PC-9 (cell line): ENCODE measurements at regions of chr7 and their contacts with region 1.

Region 1: DNA sequence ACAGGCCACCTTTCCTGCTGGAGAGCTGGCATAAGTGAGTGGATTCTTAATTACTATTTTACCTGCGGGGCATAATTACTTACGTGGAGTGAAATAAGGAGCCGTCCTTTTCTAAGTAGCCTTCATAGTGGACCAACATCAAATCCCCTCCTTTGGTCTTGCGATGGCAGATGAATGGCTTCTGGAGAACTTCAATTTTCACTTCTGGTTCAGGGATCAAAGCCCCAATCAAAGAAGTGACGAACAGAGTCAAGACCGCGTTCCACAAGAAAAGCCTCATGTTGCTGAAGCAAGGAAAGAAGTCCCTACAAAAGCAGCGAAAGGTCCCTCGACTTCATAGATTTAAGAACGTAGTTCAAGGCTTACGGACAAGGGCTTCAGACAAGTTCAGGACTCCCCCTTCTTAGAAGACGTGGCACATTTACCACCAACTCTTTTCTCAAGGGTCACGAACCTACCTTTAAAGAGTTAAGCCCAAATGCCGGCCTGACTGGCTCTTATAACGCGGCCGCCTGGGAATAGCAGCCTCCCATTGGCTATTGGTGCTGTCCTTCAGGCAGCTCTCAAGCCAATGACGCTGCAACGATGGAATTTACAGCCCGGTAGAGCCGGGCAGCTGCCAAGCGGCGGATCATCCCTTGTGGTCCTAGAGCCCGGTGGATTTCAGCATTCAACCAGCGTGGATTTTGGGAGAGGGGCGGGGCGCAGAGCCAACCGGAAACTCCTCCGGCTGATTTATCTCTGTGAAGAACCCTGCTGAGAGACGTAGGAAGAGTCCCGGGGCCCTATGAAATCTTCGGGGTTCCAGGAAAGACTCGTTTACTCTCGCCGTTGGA is at the start of gene FKBP14:
- DNase-seq: peak; percentile 97 to 99
- H3K4me3 ChIP-seq: peak within 1 kb of the TSS; percentile 75
- H3K27ac ChIP-seq: peak within 1 kb of the TSS; percentile 66
- H3K4me1 ChIP-seq: peaks cover 43% of the 10 kb centered on the region
- H3K27me3 ChIP-seq: no peaks in the 10 kb centered on the region
- CTCF ChIP-seq: no peak
- total RNA-seq, gene FKBP14: 29.8 and 29.9 TPM in 2 replicates

Region 2: DNA sequence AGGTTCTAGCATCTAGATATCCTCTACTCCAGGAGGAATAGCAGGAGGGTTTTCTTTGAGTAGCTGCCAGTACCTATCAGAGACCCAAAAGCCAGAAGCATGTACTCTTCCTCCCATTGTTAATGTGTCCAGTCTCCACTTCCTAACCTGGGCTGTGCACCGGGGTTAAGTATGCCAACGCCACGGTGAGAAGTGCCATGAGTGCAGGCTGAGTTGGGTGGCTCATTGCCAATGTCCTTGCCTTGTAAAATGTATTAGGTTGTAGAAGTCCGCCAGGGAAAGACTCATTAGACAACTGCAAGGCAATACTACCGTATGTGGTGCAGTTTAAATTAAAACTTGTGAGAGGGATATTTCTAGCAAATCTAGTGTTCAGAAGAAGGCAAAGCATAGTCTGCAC is 517.8 kb before region 1 on chr7:
- CTCF ChIA-PET with region 1: no interaction called
- POLR2A ChIA-PET with region 1: no interaction called
- intact Hi-C with region 1: no loop called
- DNase-seq: no peak
- H3K4me3 ChIP-seq: no peak overlapping the region
- H3K27ac ChIP-seq: no peak overlapping the region
- H3K4me1 ChIP-seq: no peaks in the 10 kb centered on the region
- H3K27me3 ChIP-seq: no peaks in the 10 kb centered on the region
- CTCF ChIP-seq: no peak

Region 3: DNA sequence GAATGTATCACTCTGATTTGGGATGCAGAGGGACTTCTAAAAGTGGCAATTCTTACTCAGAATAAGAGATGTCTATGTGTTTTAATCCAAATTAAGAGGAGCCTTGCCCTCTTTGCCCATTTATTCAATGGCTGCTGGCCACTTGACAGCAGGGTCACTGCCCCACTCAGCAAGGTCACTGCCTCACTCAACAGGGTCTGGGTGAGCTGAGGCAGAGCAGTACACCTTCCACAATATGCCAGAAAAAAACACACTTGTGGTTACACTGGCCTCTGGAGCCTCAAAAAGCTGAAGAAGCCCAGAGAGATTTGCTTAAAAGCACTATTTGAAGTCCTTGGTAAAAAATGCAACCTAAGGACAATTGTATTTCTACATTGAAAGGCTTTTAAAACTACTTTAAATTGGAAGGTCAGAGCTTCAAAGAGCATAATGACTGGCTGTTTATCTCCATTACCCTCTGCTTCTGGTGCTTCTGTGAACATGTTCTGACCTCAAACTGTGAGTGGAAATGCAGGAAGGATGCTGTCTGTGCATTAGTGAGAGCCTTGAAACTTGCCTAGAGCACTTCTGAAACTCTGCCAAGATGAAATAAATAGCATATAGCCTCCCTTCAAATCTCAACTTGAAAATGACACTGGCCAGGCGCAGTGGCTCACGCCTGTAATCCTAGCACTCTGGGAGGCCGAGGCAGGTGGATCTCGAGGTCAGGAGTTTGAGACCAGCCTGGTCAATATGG is 255.2 kb before region 1 on chr7:
- CTCF ChIA-PET with region 1: no interaction called
- POLR2A ChIA-PET with region 1: no interaction called
- intact Hi-C with region 1: no loop called
- DNase-seq: no peak
- H3K4me3 ChIP-seq: no peak overlapping the region
- H3K27ac ChIP-seq: no peak overlapping the region
- H3K4me1 ChIP-seq: no peaks in the 10 kb centered on the region
- H3K27me3 ChIP-seq: peaks cover 35% of the 10 kb centered on the region
- CTCF ChIP-seq: no peak

Region 4: DNA sequence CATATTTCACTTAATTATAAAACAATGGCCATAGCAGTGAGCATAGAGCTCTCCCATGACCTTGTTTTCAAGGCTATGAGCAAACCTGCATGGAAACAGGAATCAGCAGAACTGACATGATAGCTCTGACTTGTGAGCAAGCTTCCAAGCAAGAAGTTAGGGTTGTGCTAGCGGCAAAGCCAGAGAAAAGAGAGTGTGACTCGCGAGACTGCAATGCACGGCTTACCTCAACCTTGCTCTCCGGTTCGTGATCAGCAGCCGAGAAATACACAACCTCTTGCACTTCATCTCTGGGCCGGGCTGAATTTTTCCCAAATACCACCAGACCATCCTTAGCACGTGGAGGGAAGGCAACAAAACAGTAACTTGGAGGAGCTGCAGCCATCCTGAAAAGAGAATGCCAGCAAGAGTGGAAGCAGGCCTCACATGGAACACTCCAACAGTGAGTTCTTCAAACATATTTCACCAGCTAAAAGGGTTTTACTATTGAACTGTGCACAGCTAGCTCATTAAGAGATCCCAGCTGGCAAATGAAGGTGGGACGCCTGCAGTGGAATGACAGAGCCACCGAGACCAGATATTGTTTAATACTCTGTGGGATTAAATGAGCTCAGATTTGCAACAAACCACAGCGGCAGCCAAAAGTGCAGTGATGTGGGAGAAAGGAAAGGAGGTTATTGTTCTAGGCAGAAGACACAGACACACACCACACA is 57.6 kb before region 1 on chr7:
- CTCF ChIA-PET with region 1: no interaction called
- POLR2A ChIA-PET with region 1: no interaction called
- intact Hi-C with region 1: no loop called
- DNase-seq: no peak
- H3K4me3 ChIP-seq: no peak overlapping the region
- H3K27ac ChIP-seq: no peak overlapping the region
- H3K4me1 ChIP-seq: no peaks in the 10 kb centered on the region
- H3K27me3 ChIP-seq: no peaks in the 10 kb centered on the region
- CTCF ChIP-seq: no peak

Region 5: GRCh38 chr7:29988424-29989256 is 37.8 kb before region 1 on chr7:
- CTCF ChIA-PET with region 1: no interaction called
- POLR2A ChIA-PET with region 1: no interaction called
- intact Hi-C with region 1: loop called (anchors 1 kb)
- DNase-seq: peak in 1 of 2 experiments; percentile 36
- H3K4me3 ChIP-seq: peak overlapping the region; percentile 95
- H3K27ac ChIP-seq: peak overlapping the region; percentile 87
- H3K4me1 ChIP-seq: peaks cover 37% of the 10 kb centered on the region
- H3K27me3 ChIP-seq: no peaks in the 10 kb centered on the region
- CTCF ChIP-seq: no peak

Region 6: GRCh38 chr7:30134611-30135545 is 108.4 kb after region 1 on chr7 and contains the start of gene MTURN:
- CTCF ChIA-PET with region 1: no interaction called
- POLR2A ChIA-PET with region 1: interaction called, 7 read pairs
- intact Hi-C with region 1: loop called (anchors 2 kb)
- DNase-seq: peak; percentile 81 to 94
- H3K4me3 ChIP-seq: peak within 1 kb of the TSS; percentile 55
- H3K27ac ChIP-seq: no peak within 1 kb of the TSS
- H3K4me1 ChIP-seq: peaks cover 8% of the 10 kb centered on the region; the same call in 1 of the 2 replicates
- H3K27me3 ChIP-seq: peaks cover 12% of the 10 kb centered on the region; the same call in 1 of the 2 replicates
- CTCF ChIP-seq: no peak
- total RNA-seq, gene MTURN: 21.6 and 23.1 TPM in 2 replicates

Region 7: DNA sequence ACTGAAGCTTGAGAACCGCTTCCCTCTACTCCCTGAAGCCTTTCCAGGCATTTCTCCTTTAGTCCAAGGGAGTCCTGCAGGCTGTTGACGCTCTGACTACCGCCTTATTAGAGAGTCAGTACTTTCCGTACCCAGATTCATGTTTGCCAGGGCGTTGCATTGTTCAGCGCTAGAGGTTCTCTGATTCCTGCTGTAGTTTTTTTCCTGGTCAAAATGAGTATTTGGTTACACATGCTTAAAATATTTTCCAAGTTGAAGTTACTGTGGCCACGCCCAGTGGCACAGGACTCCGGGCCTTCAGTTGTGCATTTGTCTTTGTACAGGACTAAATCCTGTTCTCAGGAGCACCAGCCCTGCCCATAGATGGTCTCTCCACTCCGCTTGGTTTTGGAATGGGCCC is 116.3 kb after region 1 on chr7:
- CTCF ChIA-PET with region 1: no interaction called
- POLR2A ChIA-PET with region 1: no interaction called
- intact Hi-C with region 1: loop called (anchors 2 kb)
- DNase-seq: peak; percentile 84 to 97
- H3K4me3 ChIP-seq: peak overlapping the region; percentile 10; the same call in 1 of the 2 replicates
- H3K27ac ChIP-seq: peak overlapping the region; percentile 72
- H3K4me1 ChIP-seq: peaks cover 33% of the 10 kb centered on the region
- H3K27me3 ChIP-seq: peaks cover 27% of the 10 kb centered on the region; the same call in 1 of the 2 replicates
- CTCF ChIP-seq: no peak

Region 8: DNA sequence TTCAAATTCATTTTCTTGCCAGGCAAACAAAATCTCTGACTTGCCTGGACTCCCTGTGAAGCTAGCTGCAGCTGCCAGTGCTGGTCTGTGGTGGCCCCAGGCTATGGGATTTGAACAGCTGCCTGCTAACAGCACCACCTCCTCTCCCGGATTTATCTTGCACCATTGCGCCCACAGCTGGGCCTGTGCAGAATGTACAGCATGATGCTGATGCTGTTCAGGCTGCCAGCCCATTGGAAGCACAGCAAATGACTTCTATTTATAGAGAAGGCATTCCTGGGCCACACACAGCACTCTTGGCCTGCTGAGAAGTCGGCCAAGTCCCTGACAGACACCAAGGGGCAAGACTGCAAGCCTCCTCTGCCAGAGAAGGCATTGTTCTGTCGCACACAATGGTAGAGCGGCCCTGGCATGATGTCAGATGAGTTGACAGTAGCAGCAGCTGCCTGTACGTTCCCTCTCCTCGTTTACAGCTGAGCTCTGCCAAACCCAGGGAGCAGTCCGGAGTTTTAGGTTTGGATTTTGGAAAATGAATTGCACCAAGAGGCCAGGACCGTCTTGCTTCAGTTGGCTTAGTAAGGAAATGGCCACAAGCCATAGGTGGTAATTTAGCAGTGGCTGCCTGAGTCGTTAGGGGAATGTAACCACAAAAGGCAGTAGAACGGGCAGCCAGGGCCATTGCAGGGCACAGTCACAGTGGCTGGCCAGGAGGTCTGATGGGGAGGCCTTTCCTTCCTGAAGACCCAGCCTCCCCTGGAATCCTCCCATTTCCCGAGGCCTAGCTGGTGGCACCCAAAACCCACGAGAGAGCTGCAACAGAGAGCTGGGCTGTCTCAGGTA is 146.8 kb after region 1 on chr7:
- CTCF ChIA-PET with region 1: no interaction called
- POLR2A ChIA-PET with region 1: no interaction called
- intact Hi-C with region 1: loop called (anchors 5 kb)
- DNase-seq: peak; percentile 84 to 88
- H3K4me3 ChIP-seq: no peak overlapping the region
- H3K27ac ChIP-seq: no peak overlapping the region
- H3K4me1 ChIP-seq: peaks cover 23% of the 10 kb centered on the region
- H3K27me3 ChIP-seq: no peaks in the 10 kb centered on the region
- CTCF ChIP-seq: peak; percentile 52; the same call in 1 of the 2 replicates